Vagina (tissue), 2 donors: ENCODE measurements at regions of chr1 and their contacts with region 1.

Region 1: GRCh38 chr1:233782937-233783586 is 121.4 kb upstream of the SLC35F3 start:
- DNase-seq: no peak
- H3K4me3 ChIP-seq: no peak overlapping the region
- H3K27ac ChIP-seq: no peak overlapping the region
- H3K4me1 ChIP-seq: no peaks in the 10 kb centered on the region
- H3K27me3 ChIP-seq: no peaks in the 10 kb centered on the region
- CTCF ChIP-seq: no peak
- POLR2A ChIP-seq: no peak

Region 2: DNA sequence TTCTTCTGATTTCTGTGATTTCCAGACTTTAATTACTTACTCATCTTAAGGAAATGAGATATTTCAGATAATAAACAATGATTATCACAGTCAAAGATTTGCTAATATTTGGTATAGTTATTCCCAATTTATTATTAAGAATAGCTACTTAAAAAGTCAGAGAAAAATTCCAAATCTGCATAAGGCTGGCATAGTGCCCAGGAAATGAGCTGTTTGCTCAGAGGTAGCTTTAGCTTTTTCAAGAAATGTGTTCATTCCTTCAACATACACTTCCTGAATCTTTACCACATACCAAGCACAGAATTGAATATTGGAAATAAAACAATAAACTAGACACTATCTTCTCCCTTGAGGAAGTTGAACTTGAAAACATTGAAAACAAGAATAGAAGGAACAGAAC is 213.4 kb before region 1 on chr1:
- intact Hi-C with region 1: loop called (anchors 10 kb)
- DNase-seq: no peak
- H3K4me3 ChIP-seq: no peak overlapping the region
- H3K27ac ChIP-seq: no peak overlapping the region
- H3K4me1 ChIP-seq: no peaks in the 10 kb centered on the region
- H3K27me3 ChIP-seq: no peaks in the 10 kb centered on the region
- CTCF ChIP-seq: no peak
- POLR2A ChIP-seq: no peak

Region 3: GRCh38 chr1:233714631-233715227 is 68.3 kb before region 1 on chr1:
- intact Hi-C with region 1: no loop called
- DNase-seq: no peak
- H3K4me3 ChIP-seq: no peak overlapping the region
- H3K27ac ChIP-seq: no peak overlapping the region
- H3K4me1 ChIP-seq: no peaks in the 10 kb centered on the region
- H3K27me3 ChIP-seq: no peaks in the 10 kb centered on the region
- CTCF ChIP-seq: no peak
- POLR2A ChIP-seq: no peak

Region 4: GRCh38 chr1:233759605-233760004 is 23.5 kb before region 1 on chr1:
- intact Hi-C with region 1: no loop called
- DNase-seq: no peak
- H3K4me3 ChIP-seq: no peak overlapping the region
- H3K27ac ChIP-seq: no peak overlapping the region
- H3K4me1 ChIP-seq: no peaks in the 10 kb centered on the region
- H3K27me3 ChIP-seq: no peaks in the 10 kb centered on the region
- CTCF ChIP-seq: no peak
- POLR2A ChIP-seq: no peak